A549 (cell line): ENCODE measurements at regions of chr12 and their contacts with region 1.

Region 1: GRCh38 chr12:59113831-59114615 is 193.7 kb upstream of the LRIG3 start:
- DNase-seq: peak; percentile 43 to 84
- ATAC-seq: peak; percentile 91 to 96
- H3K4me3 ChIP-seq: no peak overlapping the region
- H3K27ac ChIP-seq: peak overlapping the region in 1 of 2 experiments; percentile 67; a peak in 2 of 6 replicates
- H3K4me1 ChIP-seq: no peaks in the 10 kb centered on the region
- CTCF ChIP-seq: peak; percentile 76
- EP300 ChIP-seq: no peak
- POLR2A ChIP-seq: no peak
- RAD21 ChIP-seq: peak; percentile 84 to 89

Region 2: DNA sequence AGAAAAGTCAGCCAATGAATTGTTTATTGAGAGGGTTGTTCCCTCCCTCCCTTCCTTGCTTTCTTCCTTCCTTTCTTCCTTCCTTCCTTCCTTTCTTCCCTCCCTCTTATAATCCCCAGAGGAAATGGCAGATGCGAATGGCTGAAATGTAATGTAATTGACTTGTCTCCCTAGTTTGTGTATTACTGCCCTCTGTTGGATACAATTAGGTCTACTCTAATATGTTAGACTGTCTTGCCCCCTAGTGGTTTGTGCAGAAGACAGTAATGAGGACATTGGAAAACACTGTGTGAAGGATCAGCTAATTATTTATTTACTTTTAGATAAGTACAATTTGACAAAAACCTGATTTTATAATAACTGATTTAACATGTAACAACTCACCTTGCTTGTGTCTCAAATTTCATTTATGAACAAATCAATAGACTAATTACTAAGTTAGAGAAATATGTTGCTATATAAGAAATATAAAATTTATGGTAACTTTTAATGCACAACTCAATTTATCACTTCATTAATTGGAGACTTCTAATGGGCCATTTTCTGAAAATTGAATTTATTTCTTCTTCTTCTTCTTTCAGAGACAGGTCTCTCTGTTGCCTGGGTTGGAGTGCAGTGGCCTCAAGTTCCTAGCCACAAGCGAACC is 36.1 kb after region 1 on chr12:
- CTCF ChIA-PET with region 1: interaction called, 15 read pairs
- POLR2A ChIA-PET with region 1: no interaction called
- DNase-seq: peak; percentile 28 to 86
- ATAC-seq: peak; percentile 76 to 99
- H3K4me3 ChIP-seq: no peak overlapping the region
- H3K27ac ChIP-seq: no peak overlapping the region
- H3K4me1 ChIP-seq: no peaks in the 10 kb centered on the region
- CTCF ChIP-seq: peak; percentile 99
- EP300 ChIP-seq: no peak
- POLR2A ChIP-seq: no peak
- RAD21 ChIP-seq: peak; percentile 93 to 99

Region 3: GRCh38 chr12:59158066-59158465 is 44.0 kb after region 1 on chr12:
- CTCF ChIA-PET with region 1: interaction called, 10 read pairs
- POLR2A ChIA-PET with region 1: no interaction called
- DNase-seq: no peak
- ATAC-seq: no peak
- H3K4me3 ChIP-seq: no peak overlapping the region
- H3K27ac ChIP-seq: no peak overlapping the region
- H3K4me1 ChIP-seq: no peaks in the 10 kb centered on the region
- CTCF ChIP-seq: no peak
- EP300 ChIP-seq: no peak
- POLR2A ChIP-seq: no peak
- RAD21 ChIP-seq: no peak

Region 4: DNA sequence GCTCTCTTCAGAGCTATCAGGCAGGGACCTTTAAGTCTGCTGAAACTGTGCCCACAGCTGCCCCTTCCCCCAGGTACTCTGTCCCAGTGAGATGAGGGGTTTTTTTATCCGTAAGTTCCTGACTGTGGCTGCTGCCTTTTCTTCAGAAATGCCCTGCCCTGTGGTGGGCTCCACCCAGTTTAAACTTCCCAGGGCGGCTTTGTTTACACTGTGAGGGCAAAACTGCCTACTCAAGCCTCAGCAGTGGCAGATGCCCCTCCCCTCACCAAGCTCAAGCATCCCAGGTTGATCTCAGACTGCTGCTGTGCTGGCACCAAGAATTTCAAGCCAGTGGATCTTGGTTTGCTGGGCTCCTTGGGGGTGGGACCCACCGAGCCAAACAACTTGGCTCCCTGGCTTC is 434.9 kb after region 1 on chr12:
- CTCF ChIA-PET with region 1: no interaction called
- POLR2A ChIA-PET with region 1: no interaction called
- DNase-seq: no peak
- ATAC-seq: no peak
- H3K4me3 ChIP-seq: no peak overlapping the region
- H3K27ac ChIP-seq: no peak overlapping the region
- H3K4me1 ChIP-seq: no peaks in the 10 kb centered on the region
- CTCF ChIP-seq: no peak
- EP300 ChIP-seq: no peak
- POLR2A ChIP-seq: no peak
- RAD21 ChIP-seq: no peak